Left colon (tissue), 2 donors: ENCODE measurements at regions of chr9 and their contacts with region 1.

Region 1: DNA sequence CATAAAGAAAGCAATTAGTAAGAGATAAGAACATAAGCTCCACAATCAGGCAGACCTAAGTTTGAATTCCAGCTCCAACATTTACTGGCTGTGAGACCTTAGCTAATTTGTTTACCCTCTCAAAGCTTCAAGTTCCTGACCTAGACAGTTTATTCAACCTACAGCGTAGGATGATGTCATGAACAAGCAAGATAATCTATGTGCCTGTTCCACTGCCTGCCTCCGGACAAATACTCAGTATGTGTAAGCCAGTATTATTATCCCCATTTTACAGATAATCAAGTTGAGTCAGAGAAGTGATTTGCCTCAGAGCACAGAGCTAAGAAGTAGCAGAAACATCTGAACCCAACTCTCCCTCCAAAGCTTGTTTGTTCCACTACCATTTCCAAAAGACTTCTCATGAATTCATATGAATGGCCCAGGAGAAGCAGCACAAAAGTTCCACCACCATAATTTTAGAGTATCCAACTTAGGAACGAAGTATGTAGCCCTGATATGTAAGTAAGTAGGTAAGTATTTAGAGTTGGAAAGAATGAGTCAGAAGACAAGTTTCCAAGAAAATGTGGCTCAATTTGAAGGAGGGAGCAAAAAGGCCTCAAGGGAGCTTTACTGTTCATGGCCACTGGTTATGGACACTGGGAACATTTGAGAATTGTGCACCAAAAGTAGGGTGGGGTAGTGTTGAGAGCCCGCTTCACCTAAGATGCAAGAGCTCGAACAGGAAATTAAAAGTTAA is 398.2 kb downstream of the NFIB start:
- DNase-seq: no peak
- ATAC-seq: no peak

Region 2: DNA sequence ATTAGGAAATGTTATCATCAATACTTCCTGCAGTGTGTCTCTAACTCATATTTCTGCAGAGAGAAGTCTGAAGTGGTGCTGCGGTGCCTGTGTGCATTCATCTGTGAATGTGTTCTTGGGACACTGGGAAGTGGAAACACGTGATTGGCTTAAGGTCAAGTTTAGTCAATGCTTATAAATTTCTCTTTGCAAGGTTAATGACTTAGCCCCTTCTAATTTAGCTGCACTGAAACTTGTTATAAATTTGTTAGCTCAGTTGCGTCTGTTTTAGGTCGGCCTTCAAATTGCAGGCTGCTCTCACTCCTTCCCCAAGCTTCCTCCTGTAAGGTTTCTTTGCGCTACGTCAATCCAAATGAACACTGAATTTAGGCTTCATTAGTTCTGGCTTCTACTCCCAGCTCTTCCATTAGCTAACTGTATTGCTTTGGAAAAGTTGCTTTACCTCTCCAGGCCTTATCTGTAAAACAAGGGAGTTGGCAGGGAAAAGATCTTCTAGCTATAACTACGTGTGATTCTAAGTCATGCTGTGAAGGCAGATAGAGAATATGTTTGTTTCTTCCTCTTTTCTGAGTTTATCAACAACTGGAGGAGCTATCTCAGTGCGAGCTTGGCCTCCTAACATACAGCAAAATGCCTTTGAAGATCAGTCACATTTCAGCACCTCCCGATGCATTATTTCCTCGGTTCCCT is 56.4 kb after region 1 on chr9:
- intact Hi-C with region 1: loop called in 1 of 2 experiments (anchors 10 kb)
- DNase-seq: no peak
- ATAC-seq: no peak